ENCODE measurements at regions of chr20 and their contacts with region 1.

Region 1: DNA sequence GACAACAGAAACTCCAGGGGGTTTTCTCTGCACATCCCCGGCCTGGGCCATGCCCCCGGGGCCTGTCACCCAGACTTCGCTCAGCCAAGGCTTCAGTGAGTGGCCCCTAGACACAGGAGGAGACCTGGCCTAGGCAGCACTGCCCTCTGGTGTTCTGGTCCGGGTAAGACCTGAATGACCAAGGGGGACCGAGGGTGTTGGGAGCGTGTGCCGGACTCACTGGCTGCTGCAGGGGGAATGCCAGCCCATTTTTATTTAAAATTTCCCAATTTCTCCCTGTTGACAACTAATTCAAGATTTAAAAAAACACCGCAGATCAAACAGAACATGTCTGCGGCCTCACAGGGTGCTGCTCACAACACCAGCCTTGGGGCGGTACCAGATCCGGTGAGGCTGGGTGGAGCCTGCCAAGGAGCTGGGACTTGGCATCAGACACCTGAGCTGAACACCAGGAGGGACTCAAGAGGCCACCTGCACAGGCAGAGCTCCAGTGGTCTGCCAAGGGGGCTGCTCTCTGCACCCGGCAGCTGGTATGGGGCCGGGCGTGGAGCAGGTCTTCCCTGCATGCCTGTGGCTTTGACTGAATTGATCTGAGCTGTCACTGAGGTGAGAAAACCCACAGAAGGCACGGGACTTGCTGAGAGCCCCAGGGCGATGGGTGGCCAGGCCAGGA is 47.8 kb downstream of the DSTN start:
- DNase-seq: peak in 1 of 2 experiments; percentile 88
- H3K4me3 ChIP-seq: no peak overlapping the region
- H3K27ac ChIP-seq: no peak overlapping the region
- H3K4me1 ChIP-seq: peaks cover 0 to 2% (median 0%) of the 10 kb centered on the region in 4 experiments; a peak in 2 of 7 replicates
- H3K27me3 ChIP-seq: no peaks in the 10 kb centered on the region
- CTCF ChIP-seq: peak; percentile 84 to 95 (median 92)
- EP300 ChIP-seq: no peak
- POLR2A ChIP-seq: no peak
- RAD21 ChIP-seq: peak; percentile 98 to 99

Region 2: GRCh38 chr20:17504898-17505635 is 112.6 kb before region 1 on chr20:
- CTCF ChIA-PET with region 1: interaction called, 114 read pairs
- POLR2A ChIA-PET with region 1: interaction called, 4 read pairs
- DNase-seq: peak in 1 of 2 experiments; percentile 81
- H3K4me3 ChIP-seq: peak overlapping the region; percentile 4 to 55 (median 44); a peak in 7 of 8 replicates
- H3K27ac ChIP-seq: no peak overlapping the region
- H3K4me1 ChIP-seq: peaks cover 0 to 10% (median 3%) of the 10 kb centered on the region in 4 experiments; a peak in 4 of 7 replicates
- H3K27me3 ChIP-seq: peaks cover 0 to 9% (median 1%) of the 10 kb centered on the region in 4 experiments; a peak in 3 of 7 replicates
- CTCF ChIP-seq: peak in 2 of 3 experiments; percentile 45 to 50; a peak in 2 of 4 replicates
- EP300 ChIP-seq: no peak
- POLR2A ChIP-seq: no peak; a peak in 1 of 3 replicates
- RAD21 ChIP-seq: peak; percentile 71 to 83

Region 3: GRCh38 chr20:17525650-17526049 is 92.0 kb before region 1 on chr20:
- CTCF ChIA-PET with region 1: interaction called, 10 read pairs
- POLR2A ChIA-PET with region 1: interaction called, 5 read pairs
- DNase-seq: no peak
- H3K4me3 ChIP-seq: 0 out of 8 replicates have a peak overlapping the region, but pooled peaks of 1 of the 4 experiments have one; percentile 24
- H3K27ac ChIP-seq: no peak overlapping the region
- H3K4me1 ChIP-seq: peaks cover 0 to 1% (median under 1%) of the 10 kb centered on the region in 4 experiments; a peak in 3 of 7 replicates
- H3K27me3 ChIP-seq: peaks cover under 1 to 11% (median 8%) of the 10 kb centered on the region in 4 experiments
- CTCF ChIP-seq: no peak
- EP300 ChIP-seq: no peak
- POLR2A ChIP-seq: no peak
- RAD21 ChIP-seq: no peak

Region 4: DNA sequence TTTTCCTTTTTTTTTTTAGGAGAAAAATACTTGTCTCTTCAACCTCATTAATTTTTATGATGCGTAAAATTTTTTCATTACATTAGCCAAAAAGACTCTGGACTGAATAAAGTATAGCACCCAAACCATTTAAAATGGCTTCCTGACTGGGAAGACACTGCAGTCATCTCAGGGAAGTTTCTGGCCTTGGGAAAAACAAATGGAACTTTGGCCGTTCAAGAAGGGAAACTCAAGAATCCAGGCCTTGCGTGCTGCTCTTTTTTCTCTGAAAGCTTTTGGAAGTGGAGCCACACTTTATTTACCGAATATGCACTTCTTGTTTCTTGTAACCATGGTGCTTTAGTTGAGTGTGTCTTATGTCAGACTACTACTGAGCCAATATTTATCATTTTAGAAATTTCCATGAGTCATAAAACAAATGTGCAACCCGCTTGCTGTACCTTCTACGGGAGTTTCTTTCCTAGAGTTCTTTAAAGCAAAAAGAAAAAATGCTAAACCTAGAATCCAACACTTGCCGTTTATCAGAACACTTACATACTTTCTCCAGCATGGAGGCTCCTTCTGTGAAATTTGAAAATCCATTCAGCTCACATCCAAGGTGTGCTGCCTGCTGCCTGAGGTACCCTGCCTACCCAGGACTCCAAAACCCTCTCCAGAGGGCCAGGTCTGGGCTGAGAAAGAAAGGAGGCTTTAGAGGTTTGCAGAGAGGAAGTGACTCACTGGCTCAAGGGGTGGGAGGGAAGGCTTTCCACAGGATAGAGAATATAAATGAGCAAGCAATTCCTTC is 59.3 kb before region 1 on chr20:
- CTCF ChIA-PET with region 1: interaction called, 10 read pairs
- POLR2A ChIA-PET with region 1: interaction called, 3 read pairs
- DNase-seq: peak in 1 of 2 experiments; percentile 45
- H3K4me3 ChIP-seq: no peak overlapping the region
- H3K27ac ChIP-seq: 0 out of 2 replicates have a peak overlapping the region, but pooled peaks have one; percentile 1
- H3K4me1 ChIP-seq: peaks cover 7 to 10% (median 9%) of the 10 kb centered on the region in 4 experiments; a peak in 5 of 7 replicates
- H3K27me3 ChIP-seq: no peaks in the 10 kb centered on the region
- CTCF ChIP-seq: no peak
- EP300 ChIP-seq: no peak
- POLR2A ChIP-seq: peak in 1 of 2 experiments; percentile 49; a peak in 1 of 3 replicates
- RAD21 ChIP-seq: no peak

Region 5: DNA sequence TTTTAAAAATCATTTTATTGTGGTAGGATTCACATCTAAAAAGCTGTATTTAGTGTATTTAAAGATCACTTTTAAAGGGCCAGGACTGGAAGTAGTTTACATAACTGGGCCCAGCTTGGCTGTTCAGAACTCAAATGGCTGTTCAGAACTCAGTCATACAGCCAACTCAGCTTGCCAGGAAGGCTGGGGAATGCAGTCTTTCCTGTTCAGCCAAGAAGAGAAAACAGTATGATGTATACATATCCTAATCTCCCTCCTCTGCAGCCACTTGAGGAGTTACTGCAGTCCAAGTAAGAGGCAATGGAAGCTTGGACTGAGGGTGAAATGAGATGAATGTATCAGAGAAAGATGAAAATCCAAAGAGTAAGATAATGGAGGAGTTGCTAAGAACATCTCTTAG is 23.2 kb before region 1 on chr20:
- CTCF ChIA-PET with region 1: interaction called, 13 read pairs
- POLR2A ChIA-PET with region 1: no interaction called
- DNase-seq: no peak
- H3K4me3 ChIP-seq: no peak overlapping the region
- H3K27ac ChIP-seq: no peak overlapping the region
- H3K4me1 ChIP-seq: peaks cover 0 to 18% (median 3%) of the 10 kb centered on the region in 4 experiments; a peak in 5 of 7 replicates
- H3K27me3 ChIP-seq: no peaks in the 10 kb centered on the region
- CTCF ChIP-seq: no peak
- EP300 ChIP-seq: no peak
- POLR2A ChIP-seq: no peak
- RAD21 ChIP-seq: no peak

Region 6: DNA sequence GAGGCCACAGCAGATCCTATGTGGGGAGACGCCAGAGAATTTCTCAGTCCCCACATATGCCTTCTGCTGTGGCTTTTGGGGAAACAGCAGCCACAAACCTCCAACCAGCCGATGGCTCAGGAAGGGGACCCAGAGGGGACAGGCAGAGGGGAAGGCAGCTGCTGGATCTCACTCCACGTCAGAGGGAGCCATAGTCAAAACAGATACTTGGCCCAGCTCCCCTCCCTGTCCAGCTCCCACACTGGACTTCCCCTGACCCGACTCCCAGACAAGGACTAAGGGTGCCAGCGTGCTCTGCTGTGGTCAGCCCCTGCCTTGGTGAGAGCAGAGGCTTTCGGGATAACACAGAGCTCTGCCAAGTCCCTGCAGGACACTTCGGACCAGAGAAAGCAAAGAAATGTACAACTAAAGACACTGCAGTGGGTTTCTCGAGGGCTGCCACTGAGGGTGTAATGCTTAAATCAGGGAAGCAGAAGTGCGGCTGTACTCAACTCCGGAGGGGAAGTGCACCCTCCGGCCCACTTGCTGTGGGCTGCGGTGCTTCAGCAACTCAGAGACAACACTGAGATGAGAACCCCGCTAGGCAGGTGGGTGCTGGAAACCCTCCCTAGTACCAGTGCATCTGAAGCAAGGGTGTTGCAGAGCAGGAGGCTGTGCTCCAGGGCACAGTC is 17.1 kb after region 1 on chr20:
- CTCF ChIA-PET with region 1: interaction called, 95 read pairs
- POLR2A ChIA-PET with region 1: interaction called, 7 read pairs
- DNase-seq: no peak
- H3K4me3 ChIP-seq: no peak overlapping the region
- H3K27ac ChIP-seq: no peak overlapping the region
- H3K4me1 ChIP-seq: peaks cover 0 to 7% (median 3%) of the 10 kb centered on the region in 4 experiments; a peak in 3 of 7 replicates
- H3K27me3 ChIP-seq: no peaks in the 10 kb centered on the region
- CTCF ChIP-seq: no peak
- EP300 ChIP-seq: no peak
- POLR2A ChIP-seq: no peak
- RAD21 ChIP-seq: no peak

Region 7: DNA sequence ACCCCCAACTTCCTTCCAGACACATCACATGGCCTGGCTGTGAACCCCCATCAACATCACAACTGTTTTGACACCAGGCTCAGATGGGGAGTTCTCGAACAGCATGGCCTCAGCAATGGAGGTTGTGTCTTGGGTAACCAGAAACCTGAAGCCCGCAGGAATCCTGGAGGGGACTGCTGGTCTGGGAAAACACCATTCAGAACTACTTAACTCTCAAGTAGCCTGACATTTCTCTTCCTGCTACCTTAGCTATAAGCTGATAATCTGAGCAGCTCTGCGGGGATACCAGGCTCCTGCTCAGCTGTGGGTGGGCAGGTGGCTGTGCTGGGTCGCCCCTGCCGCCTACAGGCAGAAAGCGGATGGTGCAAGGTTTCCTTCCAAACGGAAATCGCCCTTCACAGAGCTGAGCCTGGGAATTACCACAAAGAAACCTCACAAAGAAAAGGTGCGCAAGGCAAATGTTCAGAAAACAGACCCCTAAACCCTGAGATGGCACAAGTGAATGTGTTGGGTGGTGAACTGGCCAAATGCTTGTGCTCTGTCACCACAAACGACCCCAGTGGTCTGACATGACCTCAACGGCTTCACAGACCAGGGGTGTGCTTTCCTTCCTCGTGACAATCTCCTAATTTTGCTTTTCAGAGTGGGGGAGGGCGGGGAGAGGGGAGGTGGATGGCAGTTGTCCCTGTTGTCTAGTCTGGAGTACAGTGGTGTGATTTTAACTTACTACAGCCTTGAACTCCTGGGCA is 321.4 kb after region 1 on chr20:
- CTCF ChIA-PET with region 1: interaction called, 11 read pairs
- POLR2A ChIA-PET with region 1: no interaction called
- DNase-seq: peak; percentile 57 to 87
- H3K4me3 ChIP-seq: no peak overlapping the region
- H3K27ac ChIP-seq: peak overlapping the region; percentile 40; the same call in 1 of the 2 replicates
- H3K4me1 ChIP-seq: peaks cover 10 to 26% (median 17%) of the 10 kb centered on the region in 4 experiments
- H3K27me3 ChIP-seq: no peaks in the 10 kb centered on the region
- CTCF ChIP-seq: peak; percentile 92 to 99 (median 94)
- EP300 ChIP-seq: 0 out of 3 replicates have a peak, but pooled peaks of 1 of the 2 experiments have one; percentile 23
- POLR2A ChIP-seq: peak; percentile 50 to 65; a peak in 2 of 3 replicates
- RAD21 ChIP-seq: peak; percentile 94 to 98